Heart right ventricle (tissue), 16 donors: ENCODE measurements at regions of chr9 and their contacts with region 1.

Region 1: DNA sequence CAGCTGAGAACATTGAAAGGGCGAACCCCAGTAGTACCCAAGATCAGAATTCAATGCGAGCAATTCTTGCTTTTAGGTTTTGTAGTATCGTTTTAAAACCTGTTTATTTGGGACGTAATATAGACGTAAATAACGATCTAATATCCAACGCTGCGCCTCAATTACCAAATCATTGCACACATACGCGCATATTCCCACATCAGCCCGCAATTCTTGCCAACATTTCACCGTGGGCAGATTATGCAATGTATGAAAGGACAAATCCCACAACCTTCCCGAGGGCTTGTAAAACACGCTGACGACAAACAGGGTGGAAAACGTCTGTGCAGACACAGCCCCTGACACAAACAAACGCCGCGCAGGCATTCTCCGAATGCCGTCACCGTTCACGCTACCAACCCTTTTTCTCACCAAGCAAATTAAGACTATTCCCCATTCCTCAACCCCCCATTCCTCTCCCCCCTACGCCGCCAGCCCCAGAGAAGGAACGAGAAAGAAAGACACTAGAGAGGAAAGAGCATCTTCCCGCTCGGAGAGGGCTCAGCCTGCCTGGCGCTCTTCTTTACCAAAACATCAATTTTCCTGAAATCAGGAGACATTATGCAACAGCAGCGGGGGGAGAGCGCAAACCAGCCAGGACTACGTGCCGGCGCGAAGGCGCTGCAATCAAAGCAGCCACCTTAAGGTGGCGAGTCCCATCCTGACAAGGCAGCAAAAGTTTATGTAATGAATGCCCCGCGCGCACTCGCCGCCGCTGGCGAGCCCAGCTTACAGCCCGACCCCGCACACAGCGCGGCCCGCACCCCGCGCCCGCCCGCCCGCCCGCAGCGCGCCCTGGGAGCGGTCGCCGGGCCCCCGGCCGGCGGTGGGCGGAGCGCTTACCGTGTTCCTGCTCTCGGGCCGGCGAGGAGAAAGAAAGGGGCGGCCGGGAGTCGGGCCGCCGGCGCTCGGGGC is 597 bp downstream of the NFIL3 start:
- DNase-seq: peak; percentile 54 to 65
- ATAC-seq: peak in 6 of 8 donors; percentile 6 to 51 (median 33)
- H3K4me3 ChIP-seq: peak overlapping the region; percentile 48 to 83 (median 68)
- H3K27ac ChIP-seq: peak overlapping the region; percentile 85 to 96 (median 92)
- H3K4me1 ChIP-seq: peaks cover 0 to 73% (median 33%) of the 10 kb centered on the region in 9 donors
- H3K27me3 ChIP-seq: no peaks in the 10 kb centered on the region
- CTCF ChIP-seq: peak in 6 of 9 donors; percentile 8 to 44 (median 26)

Region 2: DNA sequence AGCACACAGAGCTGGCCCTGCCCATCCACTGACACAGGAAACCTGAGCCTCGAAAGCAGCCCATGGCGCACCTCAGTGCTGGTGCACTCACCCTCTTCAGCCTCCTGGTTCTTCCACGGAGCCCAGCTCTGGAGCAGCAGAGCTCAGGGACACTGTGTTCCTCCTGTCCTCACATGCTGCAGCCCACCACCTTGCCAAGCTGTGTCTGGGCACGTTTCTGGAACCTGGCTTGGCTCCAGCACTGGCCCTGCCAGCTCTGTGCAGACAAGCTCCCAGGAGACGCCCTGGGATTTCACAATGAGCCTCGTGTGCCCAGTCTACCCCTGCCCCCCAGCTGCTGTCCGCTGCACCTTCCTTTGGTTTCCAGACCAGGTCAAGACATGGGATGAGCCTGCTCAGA is 501.9 kb before region 1 on chr9:
- intact Hi-C with region 1: loop called in 4 of 10 experiments (anchors 5 to 10 kb)
- DNase-seq: peak; percentile 77 to 84
- ATAC-seq: peak; percentile 88 to 97 (median 94)
- H3K4me3 ChIP-seq: no peak overlapping the region
- H3K27ac ChIP-seq: peak overlapping the region in 3 of 10 donors; percentile 40 to 65 (median 61)
- H3K4me1 ChIP-seq: peaks cover 0 to 17% (median 8%) of the 10 kb centered on the region in 9 donors
- H3K27me3 ChIP-seq: peaks cover 0 to 7% (median 0%) of the 10 kb centered on the region in 7 donors
- CTCF ChIP-seq: no peak

Region 3: GRCh38 chr9:91101611-91102168 is 321.3 kb before region 1 on chr9:
- intact Hi-C with region 1: loop called in 6 of 10 experiments (anchors 2 to 10 kb)
- DNase-seq: no peak
- ATAC-seq: peak in 1 of 8 donors; percentile 7
- H3K4me3 ChIP-seq: no peak overlapping the region
- H3K27ac ChIP-seq: peak overlapping the region; percentile 50 to 89 (median 83)
- H3K4me1 ChIP-seq: peaks cover 10 to 45% (median 36%) of the 10 kb centered on the region in 9 donors
- H3K27me3 ChIP-seq: no peaks in the 10 kb centered on the region
- CTCF ChIP-seq: no peak

Region 4: GRCh38 chr9:91301161-91301560 is 121.9 kb before region 1 on chr9:
- intact Hi-C with region 1: loop called in 2 of 10 experiments (anchors 5 to 10 kb)
- DNase-seq: no peak
- ATAC-seq: peak in 1 of 8 donors; percentile 43
- H3K4me3 ChIP-seq: no peak overlapping the region
- H3K27ac ChIP-seq: peak overlapping the region in 1 of 10 donors; percentile 37
- H3K4me1 ChIP-seq: peaks cover 0 to 70% (median 21%) of the 10 kb centered on the region in 9 donors
- H3K27me3 ChIP-seq: no peaks in the 10 kb centered on the region
- CTCF ChIP-seq: no peak

Region 5: GRCh38 chr9:91315191-91315590 is 107.8 kb before region 1 on chr9:
- intact Hi-C with region 1: no loop called
- DNase-seq: no peak
- ATAC-seq: no peak
- H3K4me3 ChIP-seq: no peak overlapping the region
- H3K27ac ChIP-seq: no peak overlapping the region
- H3K4me1 ChIP-seq: peaks cover 0 to 4% (median 0%) of the 10 kb centered on the region in 9 donors
- H3K27me3 ChIP-seq: no peaks in the 10 kb centered on the region
- CTCF ChIP-seq: no peak

Region 6: GRCh38 chr9:91546574-91546973 is 123.5 kb after region 1 on chr9:
- intact Hi-C with region 1: no loop called
- DNase-seq: no peak
- ATAC-seq: no peak
- H3K4me3 ChIP-seq: no peak overlapping the region
- H3K27ac ChIP-seq: no peak overlapping the region
- H3K4me1 ChIP-seq: no peaks in the 10 kb centered on the region
- H3K27me3 ChIP-seq: no peaks in the 10 kb centered on the region
- CTCF ChIP-seq: no peak

Region 7: DNA sequence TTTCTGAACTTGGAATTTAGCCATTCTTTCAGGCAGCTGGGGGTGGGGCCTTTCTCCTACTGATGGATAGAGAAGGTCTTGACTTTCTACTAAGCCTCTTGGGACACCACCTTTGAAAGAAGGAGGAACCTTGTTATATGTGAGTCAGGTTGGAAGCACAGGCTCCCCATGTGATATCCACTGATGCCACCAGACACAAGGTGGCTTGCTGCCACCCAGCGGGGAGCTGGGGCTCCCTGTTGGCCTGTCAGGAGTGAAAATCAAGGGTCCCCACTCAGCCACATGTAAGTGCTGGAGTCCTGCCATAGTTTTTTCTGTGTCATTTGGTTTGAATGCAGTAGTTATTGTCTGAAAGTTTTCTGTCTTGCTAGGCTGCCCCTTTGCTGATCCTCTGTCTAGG is 253.0 kb after region 1 on chr9:
- intact Hi-C with region 1: loop called in 2 of 10 experiments (anchors 10 kb)
- DNase-seq: no peak
- ATAC-seq: peak in 2 of 8 donors; percentile 35 to 52
- H3K4me3 ChIP-seq: no peak overlapping the region
- H3K27ac ChIP-seq: no peak overlapping the region
- H3K4me1 ChIP-seq: no peaks in the 10 kb centered on the region
- H3K27me3 ChIP-seq: peaks cover 0 to 5% (median under 1%) of the 10 kb centered on the region in 7 donors
- CTCF ChIP-seq: peak in 5 of 9 donors; percentile 17 to 44 (median 36)

Region 8: DNA sequence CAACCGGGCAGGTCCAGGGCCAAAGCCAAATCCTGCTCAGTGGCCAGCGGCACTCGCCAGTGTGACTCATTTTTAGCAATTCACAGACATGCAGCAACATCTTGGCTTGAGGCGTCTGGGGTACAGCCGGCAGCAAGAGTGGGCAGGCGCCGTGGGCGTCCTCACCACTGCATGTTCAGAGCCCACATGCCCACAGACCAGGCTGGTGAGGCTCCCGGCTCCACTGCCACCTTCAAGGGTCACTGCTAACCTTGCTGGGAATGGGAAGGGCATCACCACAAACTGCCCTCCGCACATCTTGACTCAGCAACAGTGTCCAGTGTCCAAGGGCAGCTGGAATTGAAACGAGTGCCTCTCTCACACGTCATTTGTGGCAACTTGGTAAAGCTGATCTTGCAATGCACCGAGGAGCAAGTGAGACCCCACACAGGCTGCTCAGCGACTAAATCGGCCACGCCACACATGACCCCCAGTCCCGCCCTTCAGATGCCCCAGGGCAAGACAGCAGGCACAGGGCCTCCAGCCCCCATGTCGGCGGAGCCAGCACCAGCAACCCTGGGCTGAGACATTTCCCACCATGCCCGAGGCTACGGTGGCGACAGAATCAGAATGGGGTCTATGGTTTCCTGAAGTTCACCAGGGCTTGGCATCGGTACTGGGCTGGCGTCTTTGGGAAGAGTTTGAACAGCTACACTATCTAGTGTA is 386.7 kb after region 1 on chr9:
- intact Hi-C with region 1: no loop called
- DNase-seq: no peak
- ATAC-seq: peak in 1 of 8 donors; percentile 47
- H3K4me3 ChIP-seq: no peak overlapping the region
- H3K27ac ChIP-seq: no peak overlapping the region
- H3K4me1 ChIP-seq: no peaks in the 10 kb centered on the region
- H3K27me3 ChIP-seq: peaks cover 0 to 14% (median 0%) of the 10 kb centered on the region in 7 donors
- CTCF ChIP-seq: no peak